Activated CD4-positive, alpha-beta T cell treated with anti-CD3 and anti-CD28 coated beads for 36 hours (primary cell): ENCODE measurements at regions of chr16 and their contacts with region 1.

Region 1: DNA sequence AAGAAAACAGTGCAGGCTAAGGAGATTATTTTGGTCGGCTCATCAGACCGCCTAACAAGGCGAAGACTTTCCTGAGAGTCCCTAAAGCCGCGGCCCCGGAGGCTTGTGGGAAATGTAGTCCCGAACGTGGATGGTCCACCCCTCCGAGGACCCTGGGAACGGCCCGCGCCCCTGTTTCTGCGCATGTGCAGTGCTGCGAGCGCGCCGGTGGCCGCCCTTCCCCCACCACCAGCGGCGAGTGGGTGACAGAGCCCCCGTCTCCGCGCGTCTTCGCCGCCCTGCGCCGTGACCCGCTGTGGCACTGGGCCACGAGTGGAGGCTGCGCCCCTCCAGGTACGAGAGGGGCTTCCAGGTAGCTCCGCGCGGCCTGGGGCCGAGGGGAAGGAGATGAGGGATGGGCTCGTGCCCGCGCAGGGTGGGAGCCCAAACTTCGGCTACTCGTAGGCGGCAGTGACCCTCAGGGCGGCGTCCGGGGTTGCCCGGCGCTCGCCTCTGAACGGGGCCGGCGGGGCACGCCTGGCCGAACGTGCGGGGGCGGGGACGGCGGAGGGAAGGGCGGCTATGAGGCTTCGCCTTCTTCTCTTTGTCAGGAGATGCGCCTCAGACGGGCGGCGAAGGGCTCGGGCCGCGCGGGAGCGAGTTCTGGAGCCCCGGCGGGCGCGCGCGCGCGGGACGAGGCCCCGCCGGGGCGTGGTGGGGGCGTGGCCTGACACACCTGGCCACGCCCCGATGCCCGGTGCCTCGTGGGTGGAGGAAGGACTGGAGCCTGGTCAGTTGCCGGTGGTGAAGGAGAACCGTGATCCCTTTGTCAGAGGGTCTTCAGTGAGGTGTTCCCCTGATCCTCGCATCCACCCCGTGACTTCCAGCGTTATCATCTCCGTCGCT is at the start of gene ZFP1:
- DNase-seq: peak; percentile 97
- ATAC-seq: peak; percentile 93
- H3K4me3 Mint-ChIP-seq: peak within 1 kb of the TSS; percentile 88
- H3K27ac Mint-ChIP-seq: peak within 1 kb of the TSS; percentile 88
- H3K4me1 Mint-ChIP-seq: peaks cover 32% of the 10 kb centered on the region
- H3K27me3 Mint-ChIP-seq: no peaks in the 10 kb centered on the region
- total RNA-seq, gene ZFP1: 14.8 to 17.3 TPM

Region 2: GRCh38 chr16:74666425-74667254 is 481.9 kb before region 1 on chr16 and contains the start of gene RFWD3:
- CTCF ChIA-PET with region 1: no interaction called
- POLR2A ChIA-PET with region 1: interaction called, 3 read pairs
- intact Hi-C with region 1: loop called in 1 of 2 experiments (anchors 1 kb)
- DNase-seq: peak; percentile 98
- ATAC-seq: peak; percentile 100
- H3K4me3 Mint-ChIP-seq: peak within 1 kb of the TSS; percentile 83
- H3K27ac Mint-ChIP-seq: peak within 1 kb of the TSS; percentile 97
- H3K4me1 Mint-ChIP-seq: peaks cover 42% of the 10 kb centered on the region
- H3K27me3 Mint-ChIP-seq: no peaks in the 10 kb centered on the region
- total RNA-seq, gene RFWD3: 92.7 to 102 TPM

Region 3: DNA sequence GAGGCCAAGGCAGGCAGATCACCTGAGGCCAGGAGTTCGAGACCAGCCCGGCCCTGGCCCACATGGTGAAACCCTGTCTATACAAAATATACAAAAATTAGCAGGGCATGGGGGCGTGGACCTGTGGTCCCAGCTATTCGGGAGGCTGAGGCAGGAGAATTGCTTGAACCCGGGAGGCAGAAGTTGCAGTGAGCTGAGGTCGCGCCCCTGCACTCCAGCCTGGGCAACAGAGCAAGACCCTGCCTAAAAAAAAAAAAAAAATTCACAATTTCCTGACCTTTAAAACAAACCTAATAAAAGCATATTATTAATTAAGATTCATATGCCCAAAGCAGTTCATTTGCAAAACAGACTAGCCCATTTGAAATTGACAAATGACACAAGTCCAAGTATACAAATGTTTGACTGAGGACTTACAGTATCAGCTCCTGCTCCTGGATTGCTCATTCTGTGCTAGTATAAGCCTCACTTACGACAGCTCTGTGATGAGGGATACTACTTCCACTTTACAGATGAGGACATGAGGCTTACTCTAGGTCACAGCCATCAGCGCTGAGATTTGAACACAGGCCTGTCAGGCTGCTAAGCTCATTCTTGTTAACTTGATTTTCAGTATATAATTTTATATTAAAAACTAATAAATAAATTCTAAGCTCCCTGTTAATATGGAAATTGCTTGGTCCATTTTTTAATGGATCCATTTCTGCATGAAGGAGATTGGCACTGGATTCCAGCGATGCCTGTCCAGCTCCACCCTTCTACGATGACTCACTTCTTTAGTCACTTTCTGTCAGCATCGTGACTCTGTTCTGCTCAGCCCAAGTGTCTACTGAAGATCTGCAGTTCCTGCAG is 251.9 kb before region 1 on chr16:
- CTCF ChIA-PET with region 1: no interaction called
- POLR2A ChIA-PET with region 1: no interaction called
- intact Hi-C with region 1: no loop called
- DNase-seq: no peak
- ATAC-seq: peak; percentile 51
- H3K4me3 Mint-ChIP-seq: no peak overlapping the region
- H3K27ac Mint-ChIP-seq: no peak overlapping the region
- H3K4me1 Mint-ChIP-seq: no peaks in the 10 kb centered on the region
- H3K27me3 Mint-ChIP-seq: no peaks in the 10 kb centered on the region

Region 4: GRCh38 chr16:74984535-74985296 is 163.8 kb before region 1 on chr16 and contains the start of gene WDR59:
- CTCF ChIA-PET with region 1: no interaction called
- POLR2A ChIA-PET with region 1: no interaction called
- intact Hi-C with region 1: loop called (anchors 1 to 2 kb)
- DNase-seq: peak; percentile 100
- ATAC-seq: peak; percentile 100
- H3K4me3 Mint-ChIP-seq: peak within 1 kb of the TSS; percentile 85
- H3K27ac Mint-ChIP-seq: peak within 1 kb of the TSS; percentile 85
- H3K4me1 Mint-ChIP-seq: peaks cover 17% of the 10 kb centered on the region
- H3K27me3 Mint-ChIP-seq: no peaks in the 10 kb centered on the region
- total RNA-seq, gene WDR59: 69.2 to 91.4 TPM

Region 5: DNA sequence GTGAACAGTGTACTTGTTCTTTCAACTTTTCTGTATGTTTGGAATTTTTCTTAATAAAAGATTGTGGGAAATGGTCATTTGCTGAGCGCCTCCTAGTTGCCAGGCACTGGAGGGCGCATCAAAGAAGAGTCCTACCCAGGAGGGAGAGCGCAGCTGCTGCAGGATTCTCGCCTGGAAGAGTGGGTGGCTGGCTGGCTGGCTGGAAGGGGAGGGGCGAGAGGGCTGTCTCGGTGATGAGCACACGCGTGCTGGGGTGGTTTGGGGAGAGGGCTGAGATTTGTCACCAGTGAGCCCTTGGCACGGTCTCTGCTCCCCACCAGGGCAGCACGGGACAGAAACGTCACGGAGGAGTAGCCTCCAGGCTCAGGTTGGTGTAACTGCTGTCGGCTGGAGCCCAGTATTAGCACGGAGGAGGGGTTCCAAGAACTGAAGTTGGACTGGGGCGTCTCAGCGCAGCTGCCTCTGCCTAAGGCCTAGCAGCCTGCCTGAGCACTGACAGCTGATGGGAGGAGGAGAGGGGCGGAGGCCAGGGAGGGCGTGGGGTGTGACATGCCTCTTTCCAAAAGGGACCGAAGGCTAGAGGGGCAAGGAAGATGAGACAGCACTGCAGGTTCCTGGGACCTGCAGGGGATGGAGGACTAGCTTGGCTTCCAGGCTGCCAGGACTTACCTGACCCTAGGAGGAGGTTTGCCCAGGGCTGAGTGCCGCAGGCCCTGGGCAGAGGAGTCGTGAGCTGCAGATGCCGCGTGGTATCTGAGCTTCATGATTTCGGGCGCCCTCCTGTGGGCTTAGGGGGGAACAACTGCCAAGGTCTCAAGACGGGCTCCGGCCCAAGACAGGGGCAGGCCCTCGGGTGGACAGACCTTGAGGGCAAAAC is 37.7 kb before region 1 on chr16:
- CTCF ChIA-PET with region 1: interaction called, 8 read pairs
- POLR2A ChIA-PET with region 1: interaction called, 6 read pairs
- intact Hi-C with region 1: loop called in 1 of 2 experiments (anchors 1 kb)
- DNase-seq: peak; percentile 93
- ATAC-seq: peak; percentile 67
- H3K4me3 Mint-ChIP-seq: peak overlapping the region; percentile 84
- H3K27ac Mint-ChIP-seq: peak overlapping the region; percentile 92
- H3K4me1 Mint-ChIP-seq: peaks cover 63% of the 10 kb centered on the region
- H3K27me3 Mint-ChIP-seq: peaks cover 6% of the 10 kb centered on the region

Region 6: GRCh38 chr16:75519881-75520280 is 371.3 kb after region 1 on chr16:
- CTCF ChIA-PET with region 1: no interaction called
- POLR2A ChIA-PET with region 1: no interaction called
- intact Hi-C with region 1: loop called in 1 of 2 experiments (anchors 1 kb)
- DNase-seq: no peak
- ATAC-seq: no peak
- H3K4me3 Mint-ChIP-seq: no peak overlapping the region
- H3K27ac Mint-ChIP-seq: no peak overlapping the region
- H3K4me1 Mint-ChIP-seq: peaks cover 7% of the 10 kb centered on the region
- H3K27me3 Mint-ChIP-seq: no peaks in the 10 kb centered on the region

Region 7: DNA sequence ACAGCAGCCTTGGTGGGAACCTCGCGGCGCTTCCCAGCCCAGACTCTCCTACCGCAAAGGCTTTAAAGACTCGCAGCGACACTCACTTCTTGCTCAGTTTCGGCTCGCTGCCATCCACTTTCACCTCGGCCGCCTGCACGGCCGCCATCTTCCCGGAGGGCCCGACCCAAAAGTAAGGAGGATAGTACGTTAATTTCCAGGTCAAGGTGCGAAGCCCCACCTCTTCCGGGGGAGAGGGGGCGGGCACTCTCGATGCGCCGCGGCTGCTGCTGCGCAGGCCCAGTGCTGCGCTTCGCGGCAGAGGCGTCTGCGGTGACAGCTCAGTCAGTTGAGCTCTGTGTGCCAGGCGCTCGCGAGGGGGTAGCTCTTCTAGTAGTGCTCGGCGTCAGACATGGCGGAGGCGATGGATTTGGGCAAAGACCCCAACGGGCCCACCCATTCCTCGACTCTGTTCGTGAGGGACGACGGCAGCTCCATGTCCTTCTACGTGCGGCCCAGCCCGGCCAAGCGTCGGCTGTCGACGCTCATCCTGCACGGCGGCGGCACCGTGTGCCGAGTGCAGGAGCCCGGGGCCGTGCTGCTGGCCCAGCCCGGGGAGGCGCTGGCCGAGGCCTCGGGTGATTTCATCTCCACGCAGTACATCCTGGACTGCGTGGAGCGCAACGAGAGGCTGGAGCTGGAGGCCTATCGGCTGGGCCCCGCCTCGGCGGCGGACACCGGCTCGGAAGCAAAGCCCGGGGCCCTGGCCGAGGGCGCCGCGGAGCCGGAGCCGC is 499.1 kb after region 1 on chr16 and contains the starts of genes KARS1 and TERF2IP:
- CTCF ChIA-PET with region 1: no interaction called
- POLR2A ChIA-PET with region 1: no interaction called
- intact Hi-C with region 1: loop called in 1 of 2 experiments (anchors 1 kb)
- DNase-seq: peak; percentile 97
- ATAC-seq: peak; percentile 92
- H3K4me3 Mint-ChIP-seq: peak within 1 kb of the TSS; percentile 85
- H3K27ac Mint-ChIP-seq: peak within 1 kb of the TSS; percentile 98
- H3K4me1 Mint-ChIP-seq: peaks cover 54% of the 10 kb centered on the region
- H3K27me3 Mint-ChIP-seq: no peaks in the 10 kb centered on the region
- total RNA-seq, gene KARS1: 309 to 332 TPM
- total RNA-seq, gene TERF2IP: 70.6 to 72.6 TPM

Region 8: DNA sequence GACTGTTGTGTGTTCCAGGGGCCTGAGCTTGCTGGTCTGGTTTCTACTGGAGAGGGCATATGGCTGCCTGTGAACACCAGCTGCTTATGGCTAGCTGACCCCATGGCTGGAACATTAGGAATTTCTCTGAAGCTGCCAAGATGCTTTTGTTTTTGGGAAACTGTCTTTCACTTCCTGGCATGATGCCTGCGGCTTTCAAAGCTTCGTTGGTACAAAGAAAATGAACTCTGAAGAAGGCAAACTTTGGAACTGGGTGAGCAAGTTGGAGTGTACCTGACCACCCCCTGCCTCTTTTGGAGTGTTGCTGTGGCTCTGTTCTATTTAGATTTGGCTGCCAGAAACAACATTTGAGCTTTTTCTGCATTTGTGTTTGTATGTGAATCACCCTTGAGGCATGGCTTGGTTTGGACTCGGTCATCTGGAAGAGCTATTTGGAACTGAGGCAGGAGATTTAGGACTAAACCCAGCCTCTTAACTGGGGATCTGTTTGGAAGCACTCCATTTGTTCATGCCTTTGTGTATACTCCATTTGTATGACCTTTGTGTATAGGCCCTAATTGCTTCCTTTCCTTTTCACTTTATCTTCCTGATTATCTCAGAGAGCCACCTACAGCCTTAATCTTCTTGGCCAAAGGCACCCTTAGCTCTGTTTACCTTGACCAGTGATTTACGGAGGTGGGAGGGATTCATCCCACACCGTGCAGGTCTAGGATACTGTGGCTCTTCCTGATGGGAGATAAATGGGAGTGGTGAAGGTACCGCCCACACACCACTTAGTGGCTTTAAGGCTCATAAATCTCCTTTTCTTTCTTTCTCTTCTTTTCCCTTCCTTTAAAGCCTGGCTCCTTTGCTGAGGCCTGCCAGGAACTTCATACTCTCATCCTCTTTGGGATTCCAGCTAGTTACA is 585.0 kb after region 1 on chr16:
- CTCF ChIA-PET with region 1: no interaction called
- POLR2A ChIA-PET with region 1: no interaction called
- intact Hi-C with region 1: no loop called
- DNase-seq: no peak
- ATAC-seq: no peak
- H3K4me3 Mint-ChIP-seq: no peak overlapping the region
- H3K27ac Mint-ChIP-seq: no peak overlapping the region
- H3K4me1 Mint-ChIP-seq: no peaks in the 10 kb centered on the region
- H3K27me3 Mint-ChIP-seq: no peaks in the 10 kb centered on the region